CD4-positive, alpha-beta memory T cell (primary cell): ENCODE measurements at regions of chr21 and their contacts with region 1.

Region 1: DNA sequence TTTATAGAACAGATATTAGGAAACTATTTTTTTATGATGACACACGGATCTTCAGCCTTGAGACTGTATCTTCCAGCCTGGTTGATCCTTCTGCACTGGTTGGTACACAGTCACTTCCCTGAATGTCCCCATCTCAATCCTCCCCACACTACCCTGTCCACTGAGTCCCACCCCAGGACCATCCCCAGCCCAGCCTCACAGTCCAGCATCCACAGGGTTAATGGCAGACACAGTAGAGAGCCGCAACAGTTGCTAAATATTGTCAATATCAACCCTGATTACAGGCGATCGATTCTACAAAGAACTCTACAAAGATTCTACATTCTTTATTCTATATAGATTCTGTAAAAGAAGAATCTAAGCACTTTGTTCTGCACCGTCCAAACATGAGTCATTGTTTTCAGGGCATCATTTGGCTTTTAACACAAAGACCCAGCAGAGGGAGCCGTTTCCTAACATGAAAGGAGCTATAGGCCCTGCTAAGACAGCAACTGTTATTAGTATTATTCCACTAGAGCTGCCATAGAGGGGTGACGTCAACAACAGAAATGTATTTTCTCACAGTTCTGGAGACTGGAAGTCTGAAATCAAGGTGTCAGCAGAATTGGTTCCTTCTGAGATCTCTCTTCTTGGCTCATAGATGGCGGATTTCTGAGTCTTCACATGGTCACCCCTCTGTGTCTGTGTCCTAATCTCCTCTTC is 30.1 kb upstream of the IFNAR2 start:
- DNase-seq: peak; percentile 80 to 92 (median 84)
- H3K4me3 ChIP-seq: no peak overlapping the region
- H3K4me3 Mint-ChIP-seq: no peak overlapping the region
- H3K27ac ChIP-seq: no peak overlapping the region
- H3K27ac Mint-ChIP-seq: peak overlapping the region in 6 of 7 donors; percentile 65 to 88 (median 80)
- H3K4me1 ChIP-seq: peaks cover 18% of the 10 kb centered on the region
- H3K4me1 Mint-ChIP-seq: peaks cover 22 to 43% (median 32%) of the 10 kb centered on the region in 4 donors
- H3K27me3 ChIP-seq: no peaks in the 10 kb centered on the region
- H3K27me3 Mint-ChIP-seq: peaks cover 2 to 3% of the 10 kb centered on the region in 2 donors

Region 2: DNA sequence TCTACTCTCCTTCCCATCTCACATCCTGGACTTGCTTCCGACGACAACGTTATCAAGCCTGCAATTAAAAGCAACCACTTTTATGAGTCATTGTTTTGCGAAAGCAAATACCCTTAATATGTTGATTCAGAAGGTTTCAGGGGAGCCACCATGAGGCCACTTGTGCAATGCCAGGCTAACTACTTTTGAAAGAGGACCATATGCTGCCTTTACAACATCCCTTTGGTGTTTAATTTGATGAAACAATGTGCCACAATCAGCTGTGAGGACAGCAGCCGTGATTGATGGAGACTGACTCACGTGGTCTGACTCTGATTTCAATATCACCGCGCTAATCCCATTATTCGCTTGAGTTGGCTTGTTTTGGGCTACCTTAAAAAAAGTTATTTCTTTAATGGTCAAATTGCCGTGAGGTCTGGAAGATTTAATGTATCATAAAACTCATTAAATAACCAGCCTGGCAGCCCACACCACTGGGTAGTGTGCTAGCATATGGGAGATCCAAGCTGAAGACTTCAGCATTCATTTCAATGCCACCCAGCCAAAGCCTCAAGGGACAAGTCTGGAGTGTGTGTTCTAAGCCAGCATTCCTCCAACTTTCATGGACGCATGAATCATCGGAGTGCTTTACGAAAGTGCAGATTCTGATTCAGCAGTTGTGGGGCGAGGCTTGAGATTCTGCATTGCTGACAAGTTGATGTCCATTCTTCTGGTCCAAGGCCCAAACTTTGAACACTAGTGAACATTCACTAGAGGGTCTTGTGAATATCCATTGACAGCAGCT is 354.8 kb before region 1 on chr21:
- CTCF ChIA-PET with region 1: interaction called, 18 read pairs
- POLR2A ChIA-PET with region 1: no interaction called
- intact Hi-C with region 1: no loop called
- DNase-seq: no peak
- H3K4me3 ChIP-seq: no peak overlapping the region
- H3K4me3 Mint-ChIP-seq: no peak overlapping the region
- H3K27ac ChIP-seq: no peak overlapping the region
- H3K27ac Mint-ChIP-seq: no peak overlapping the region
- H3K4me1 ChIP-seq: no peaks in the 10 kb centered on the region
- H3K4me1 Mint-ChIP-seq: no peaks in the 10 kb centered on the region
- H3K27me3 ChIP-seq: no peaks in the 10 kb centered on the region
- H3K27me3 Mint-ChIP-seq: peaks cover 4 to 17% of the 10 kb centered on the region in 2 donors

Region 3: DNA sequence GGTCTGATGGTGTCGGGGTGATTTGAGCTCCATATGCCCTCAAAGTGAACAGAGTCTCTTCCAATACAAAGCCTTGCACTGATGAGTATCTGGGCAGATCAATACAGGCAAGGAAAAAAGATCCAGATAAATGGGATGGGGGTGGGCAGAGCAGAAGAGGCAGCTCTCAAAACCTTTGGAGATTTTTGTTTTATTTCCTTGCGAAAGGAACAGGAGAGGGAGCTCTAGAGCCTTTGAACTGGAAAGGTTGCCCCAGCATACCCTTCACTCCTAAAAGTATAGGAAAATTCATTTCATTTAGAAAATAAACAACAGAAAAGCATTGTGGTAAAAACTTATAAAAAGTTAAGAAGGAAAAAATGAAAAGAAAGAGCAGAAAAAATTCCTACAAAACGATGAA is 205.4 kb before region 1 on chr21:
- CTCF ChIA-PET with region 1: interaction called, 31 read pairs
- POLR2A ChIA-PET with region 1: no interaction called
- intact Hi-C with region 1: loop called (anchors 1 kb)
- DNase-seq: no peak
- H3K4me3 ChIP-seq: no peak overlapping the region
- H3K4me3 Mint-ChIP-seq: no peak overlapping the region
- H3K27ac ChIP-seq: no peak overlapping the region
- H3K27ac Mint-ChIP-seq: peak overlapping the region in 1 of 7 donors; percentile 19
- H3K4me1 ChIP-seq: no peaks in the 10 kb centered on the region
- H3K4me1 Mint-ChIP-seq: no peaks in the 10 kb centered on the region
- H3K27me3 ChIP-seq: no peaks in the 10 kb centered on the region
- H3K27me3 Mint-ChIP-seq: peaks cover 19 to 22% of the 10 kb centered on the region in 2 donors

Region 4: DNA sequence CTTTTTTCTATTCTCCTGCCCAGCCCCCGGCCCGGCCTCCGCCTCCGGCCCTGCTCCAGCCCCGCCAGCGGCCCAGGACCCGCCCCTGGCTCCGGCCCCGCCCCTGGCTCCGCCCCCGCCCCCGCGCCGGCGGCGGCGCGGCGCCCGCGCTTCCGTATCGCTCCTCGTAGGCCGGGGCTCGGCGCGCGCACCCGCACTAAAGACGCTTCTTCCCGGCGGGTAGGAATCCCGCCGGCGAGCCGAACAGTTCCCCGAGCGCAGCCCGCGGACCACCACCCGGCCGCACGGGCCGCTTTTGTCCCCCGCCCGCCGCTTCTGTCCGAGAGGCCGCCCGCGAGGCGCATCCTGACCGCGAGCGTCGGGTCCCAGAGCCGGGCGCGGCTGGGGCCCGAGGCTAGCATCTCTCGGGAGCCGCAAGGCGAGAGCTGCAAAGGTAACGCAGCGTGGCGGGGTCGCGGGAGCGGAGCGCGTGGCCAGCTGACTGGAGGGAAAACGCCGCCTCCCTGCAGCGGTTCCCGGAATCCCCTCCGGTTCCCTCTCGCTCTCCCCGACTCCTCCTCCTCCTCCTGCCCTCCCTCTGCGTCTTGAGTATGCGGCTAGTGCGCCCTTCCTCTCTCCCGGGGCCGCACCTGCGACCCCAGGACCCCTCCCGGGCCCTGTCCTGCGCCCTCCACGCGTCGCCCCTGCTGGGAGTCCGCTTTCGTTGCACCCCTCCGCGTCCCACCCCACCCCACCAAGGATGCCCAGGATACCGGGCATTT is 30.3 kb after region 1 on chr21 and contains the start of gene IFNAR2:
- CTCF ChIA-PET with region 1: interaction called, 11 read pairs
- POLR2A ChIA-PET with region 1: interaction called, 10 read pairs
- intact Hi-C with region 1: loop called (anchors 2 kb)
- DNase-seq: peak; percentile 63 to 73 (median 66)
- H3K4me3 ChIP-seq: peak within 1 kb of the TSS; percentile 70 to 87
- H3K4me3 Mint-ChIP-seq: peak within 1 kb of the TSS; percentile 89 to 97 (median 94)
- H3K27ac ChIP-seq: peak within 1 kb of the TSS; percentile 86
- H3K27ac Mint-ChIP-seq: peak within 1 kb of the TSS; percentile 90 to 96 (median 94)
- H3K4me1 ChIP-seq: peaks cover 41% of the 10 kb centered on the region
- H3K4me1 Mint-ChIP-seq: peaks cover 32 to 49% (median 39%) of the 10 kb centered on the region in 4 donors
- H3K27me3 ChIP-seq: no peaks in the 10 kb centered on the region
- H3K27me3 Mint-ChIP-seq: no peaks in the 10 kb centered on the region
- total RNA-seq, gene IFNAR2: 76.5 to 77.7 TPM

Region 5: DNA sequence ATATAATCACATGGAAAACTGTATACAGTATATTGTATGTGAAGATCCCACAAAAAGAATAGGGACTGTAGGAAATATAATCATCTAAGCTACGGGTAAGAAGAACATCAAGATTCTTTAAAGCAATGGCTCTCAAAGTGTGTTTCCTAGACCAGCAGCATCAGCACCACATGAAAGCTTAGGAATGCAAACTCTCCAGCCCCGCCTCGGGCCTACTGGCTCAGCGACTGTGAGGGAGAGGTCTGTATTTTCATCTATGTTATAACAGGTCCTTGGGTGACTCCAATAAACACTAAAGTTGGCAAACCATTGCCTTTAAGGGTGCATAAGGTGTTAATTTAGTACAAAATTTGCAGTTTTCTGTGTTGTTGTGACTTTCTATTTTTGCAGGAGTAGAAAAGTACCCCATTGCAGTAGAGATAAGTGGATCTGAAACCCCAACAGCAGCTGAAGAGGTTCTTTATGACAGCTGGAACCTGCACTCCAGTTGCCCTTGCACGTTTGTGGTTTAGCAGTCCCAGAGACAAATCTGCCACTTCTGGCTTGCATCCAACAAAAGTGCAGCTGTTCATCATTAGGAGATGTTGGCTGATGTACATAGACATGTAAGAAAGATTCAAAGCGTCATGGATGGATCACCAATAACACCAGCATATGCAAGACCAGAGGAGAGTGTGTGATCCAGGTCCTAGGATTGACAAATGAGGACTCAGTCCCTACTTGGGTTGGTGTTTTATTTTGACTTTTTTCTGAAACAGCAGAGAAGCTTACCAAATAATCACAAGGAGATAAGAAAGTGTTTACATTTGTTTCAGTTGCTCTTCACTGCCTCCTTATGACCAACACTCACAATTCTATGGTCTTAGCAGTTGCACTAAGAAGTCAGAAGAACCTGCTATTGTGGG is 109.2 kb after region 1 on chr21:
- CTCF ChIA-PET with region 1: interaction called, 3 read pairs
- POLR2A ChIA-PET with region 1: no interaction called
- intact Hi-C with region 1: loop called (anchors 1 kb)
- DNase-seq: peak in 4 of 5 donors; percentile 36 to 49 (median 44)
- H3K4me3 ChIP-seq: no peak overlapping the region
- H3K4me3 Mint-ChIP-seq: peak overlapping the region in 2 of 8 donors; percentile 19 to 40
- H3K27ac ChIP-seq: no peak overlapping the region
- H3K27ac Mint-ChIP-seq: peak overlapping the region in 4 of 7 donors; percentile 0 to 17 (median 4)
- H3K4me1 ChIP-seq: peaks cover 12% of the 10 kb centered on the region
- H3K4me1 Mint-ChIP-seq: peaks cover 9 to 38% (median 22%) of the 10 kb centered on the region in 4 donors
- H3K27me3 ChIP-seq: no peaks in the 10 kb centered on the region
- H3K27me3 Mint-ChIP-seq: no peaks in the 10 kb centered on the region

Region 6: GRCh38 chr21:33374450-33375096 is 174.9 kb after region 1 on chr21:
- CTCF ChIA-PET with region 1: interaction called, 28 read pairs
- POLR2A ChIA-PET with region 1: no interaction called
- intact Hi-C with region 1: loop called (anchors 1 kb)
- DNase-seq: peak in 4 of 5 donors; percentile 52 to 55 (median 54)
- H3K4me3 ChIP-seq: no peak overlapping the region
- H3K4me3 Mint-ChIP-seq: no peak overlapping the region
- H3K27ac ChIP-seq: no peak overlapping the region
- H3K27ac Mint-ChIP-seq: peak overlapping the region in 1 of 7 donors; percentile 51
- H3K4me1 ChIP-seq: peaks cover 13% of the 10 kb centered on the region
- H3K4me1 Mint-ChIP-seq: peaks cover 7 to 21% (median 10%) of the 10 kb centered on the region in 4 donors
- H3K27me3 ChIP-seq: no peaks in the 10 kb centered on the region
- H3K27me3 Mint-ChIP-seq: no peaks in the 10 kb centered on the region

Region 7: GRCh38 chr21:33641336-33642026 is 441.8 kb after region 1 on chr21 and contains the start of gene CRYZL1:
- CTCF ChIA-PET with region 1: no interaction called
- POLR2A ChIA-PET with region 1: no interaction called
- intact Hi-C with region 1: no loop called
- DNase-seq: peak; percentile 100
- H3K4me3 ChIP-seq: peak within 1 kb of the TSS; percentile 87 to 94
- H3K4me3 Mint-ChIP-seq: peak within 1 kb of the TSS; percentile 93 to 99 (median 98)
- H3K27ac ChIP-seq: peak within 1 kb of the TSS; percentile 67
- H3K27ac Mint-ChIP-seq: peak within 1 kb of the TSS; percentile 88 to 100 (median 97)
- H3K4me1 ChIP-seq: peaks cover 28% of the 10 kb centered on the region
- H3K4me1 Mint-ChIP-seq: peaks cover 17 to 50% (median 28%) of the 10 kb centered on the region in 4 donors
- H3K27me3 ChIP-seq: peaks cover 7% of the 10 kb centered on the region
- H3K27me3 Mint-ChIP-seq: peaks cover 5 to 15% of the 10 kb centered on the region in 2 donors
- total RNA-seq, gene CRYZL1: 63.9 to 64.2 TPM

Region 8: GRCh38 chr21:34020005-34020847 is 820.6 kb after region 1 on chr21:
- CTCF ChIA-PET with region 1: no interaction called
- POLR2A ChIA-PET with region 1: no interaction called
- intact Hi-C with region 1: no loop called
- DNase-seq: no peak
- H3K4me3 ChIP-seq: no peak overlapping the region
- H3K4me3 Mint-ChIP-seq: peak overlapping the region in 2 of 8 donors; percentile 0 to 40
- H3K27ac ChIP-seq: no peak overlapping the region
- H3K27ac Mint-ChIP-seq: no peak overlapping the region
- H3K4me1 ChIP-seq: peaks cover 29% of the 10 kb centered on the region
- H3K4me1 Mint-ChIP-seq: peaks cover 11 to 29% (median 14%) of the 10 kb centered on the region in 4 donors
- H3K27me3 ChIP-seq: no peaks in the 10 kb centered on the region
- H3K27me3 Mint-ChIP-seq: no peaks in the 10 kb centered on the region